ENCODE measurements at regions of chr9 and their contacts with region 1.

Region 1: GRCh38 chr9:113737517-113738271 is 138.4 kb upstream of the ZNF618 start:
- DNase-seq: peak; percentile 69
- H3K4me3 Mint-ChIP-seq: no peak overlapping the region
- H3K27ac Mint-ChIP-seq: no peak overlapping the region
- H3K4me1 Mint-ChIP-seq: no peaks in the 10 kb centered on the region
- H3K27me3 Mint-ChIP-seq: peaks cover 51% of the 10 kb centered on the region
- CTCF ChIP-seq: peak; percentile 31

Region 2: GRCh38 chr9:114047717-114048116 is 310.0 kb after region 1 on chr9:
- CTCF ChIA-PET with region 1: interaction called, 5 read pairs
- intact Hi-C with region 1: loop called (anchors 5 kb)
- DNase-seq: peak; percentile 31
- H3K4me3 Mint-ChIP-seq: no peak overlapping the region
- H3K27ac Mint-ChIP-seq: no peak overlapping the region
- H3K4me1 Mint-ChIP-seq: no peaks in the 10 kb centered on the region
- H3K27me3 Mint-ChIP-seq: no peaks in the 10 kb centered on the region
- CTCF ChIP-seq: no peak

Measured in Calu3 (cell line).